Activated B cell treated with CpG ODN at 0.5 μM for 24 hours (primary cell): ENCODE measurements at regions of chr3 and their contacts with region 1.

Region 1: GRCh38 chr3:9119331-9119730 is 130.1 kb downstream of the SRGAP3 start:
- DNase-seq: no peak
- ATAC-seq: no peak
- H3K4me3 Mint-ChIP-seq: no peak overlapping the region
- H3K27ac Mint-ChIP-seq: no peak overlapping the region
- H3K4me1 Mint-ChIP-seq: no peaks in the 10 kb centered on the region
- H3K27me3 Mint-ChIP-seq: peaks cover 3% of the 10 kb centered on the region
- CTCF ChIP-seq: no peak

Region 2: DNA sequence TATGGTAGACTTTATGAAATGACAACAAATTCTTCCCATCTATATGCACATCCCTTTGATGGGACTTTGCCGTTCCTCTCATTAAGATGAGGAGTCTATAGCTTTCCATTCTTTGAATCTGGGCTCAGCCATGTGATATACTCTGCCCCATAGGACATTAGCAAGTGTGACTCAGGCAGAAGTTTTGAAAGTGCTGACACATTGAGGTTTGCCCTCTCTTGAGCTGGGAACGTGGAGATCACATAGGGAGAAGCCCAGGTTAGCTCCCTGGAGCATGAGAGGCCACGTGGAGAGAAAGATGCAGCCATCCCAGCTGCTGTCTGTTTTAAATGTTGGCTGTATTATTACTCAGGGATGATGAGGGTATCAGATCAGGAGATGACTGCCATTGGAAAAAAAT is 282.2 kb before region 1 on chr3:
- CTCF ChIA-PET with region 1: no interaction called
- POLR2A ChIA-PET with region 1: no interaction called
- intact Hi-C with region 1: no loop called
- DNase-seq: no peak
- ATAC-seq: no peak
- H3K4me3 Mint-ChIP-seq: no peak overlapping the region
- H3K27ac Mint-ChIP-seq: no peak overlapping the region
- H3K4me1 Mint-ChIP-seq: no peaks in the 10 kb centered on the region
- H3K27me3 Mint-ChIP-seq: no peaks in the 10 kb centered on the region
- CTCF ChIP-seq: no peak

Region 3: DNA sequence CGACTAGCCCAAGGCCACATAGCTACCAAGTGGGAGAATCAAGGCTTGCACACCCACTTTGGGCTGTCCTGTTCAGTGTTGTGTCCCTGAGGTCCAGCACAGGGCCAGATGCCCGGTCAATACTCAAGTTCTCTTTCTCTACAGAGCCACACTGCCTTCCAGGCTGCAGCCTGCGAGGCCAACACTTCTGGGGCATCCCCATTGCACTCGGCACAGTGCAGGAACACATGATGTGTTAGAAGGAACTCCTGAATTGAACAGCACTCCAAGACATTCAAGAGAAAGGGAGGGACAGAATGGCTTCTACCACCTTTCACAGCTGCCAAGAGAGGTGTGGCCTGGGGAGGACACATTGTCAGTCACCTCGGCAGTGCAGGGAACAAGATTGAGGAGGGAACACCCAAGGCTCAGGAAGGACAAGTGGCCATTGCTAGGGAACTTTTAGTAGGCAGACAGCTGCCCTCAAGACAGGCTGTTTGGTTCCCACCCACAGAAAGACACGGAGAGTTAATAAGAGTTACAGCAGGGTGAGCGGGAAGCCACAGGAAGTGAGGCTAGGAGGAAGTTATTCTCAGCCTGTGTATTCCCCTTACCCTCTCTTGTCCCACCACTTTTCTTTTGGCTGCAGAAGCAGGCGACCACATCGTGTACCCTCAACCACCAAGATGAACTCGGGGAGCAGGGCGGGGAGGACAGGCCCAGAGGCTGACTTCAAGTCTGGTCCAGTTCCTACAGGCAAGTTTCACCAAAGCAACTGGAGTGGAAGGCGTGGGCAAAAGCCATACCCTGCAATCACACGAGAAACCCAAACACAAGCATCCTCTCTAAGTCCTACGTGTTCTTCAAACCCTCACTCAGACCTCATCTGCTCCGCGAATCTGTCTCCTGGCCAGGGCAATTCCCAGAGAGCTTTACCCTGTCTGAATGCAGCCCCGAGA is 60.8 kb after region 1 on chr3:
- CTCF ChIA-PET with region 1: no interaction called
- POLR2A ChIA-PET with region 1: no interaction called
- intact Hi-C with region 1: loop called (anchors 5 kb)
- DNase-seq: no peak
- ATAC-seq: peak; percentile 37
- H3K4me3 Mint-ChIP-seq: peak overlapping the region; percentile 53
- H3K27ac Mint-ChIP-seq: no peak overlapping the region
- H3K4me1 Mint-ChIP-seq: peaks cover 22% of the 10 kb centered on the region
- H3K27me3 Mint-ChIP-seq: no peaks in the 10 kb centered on the region
- CTCF ChIP-seq: no peak

Region 4: DNA sequence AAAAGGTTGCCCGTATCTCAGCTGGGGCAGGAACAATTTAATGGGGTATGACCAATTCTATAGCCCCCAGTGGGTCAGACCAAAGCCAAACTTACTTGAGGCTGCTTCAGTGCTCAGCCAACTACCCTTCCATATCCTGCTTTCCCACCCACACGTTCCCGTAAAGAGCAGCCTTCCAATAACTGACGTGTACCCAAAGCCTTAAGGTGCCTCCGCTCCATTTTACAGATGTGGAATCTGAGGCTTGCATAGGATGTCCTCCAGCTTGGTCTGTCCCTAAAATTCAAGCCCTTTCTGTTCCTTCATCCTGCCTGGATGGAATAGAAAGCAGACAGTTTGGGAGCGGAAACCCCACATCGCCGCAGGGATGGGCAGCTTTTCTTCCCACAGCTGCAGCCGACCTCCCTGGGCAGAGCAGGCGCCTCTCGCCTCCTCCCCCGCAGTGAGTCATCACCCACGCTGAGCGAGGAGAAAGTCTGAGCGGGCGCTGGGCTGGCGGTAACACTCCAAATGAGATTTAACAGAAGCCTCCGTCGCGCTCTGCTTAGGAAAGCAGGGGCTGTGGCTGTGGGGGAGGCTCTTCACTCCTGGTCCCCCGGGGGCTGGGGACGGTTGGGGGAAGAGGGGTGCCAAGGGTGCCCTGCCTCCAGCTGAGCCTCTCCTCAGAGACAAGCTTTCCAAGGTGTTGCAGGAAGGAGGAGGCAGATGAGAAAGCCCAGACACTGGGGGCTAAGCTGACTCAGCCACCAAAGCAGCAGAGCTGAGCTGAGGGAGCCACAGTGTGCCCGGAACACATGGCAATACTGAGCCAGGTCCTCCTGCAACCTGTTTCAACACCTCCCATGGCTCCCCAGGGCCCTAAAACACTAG is 1977.2 kb after region 1 on chr3:
- CTCF ChIA-PET with region 1: no interaction called
- POLR2A ChIA-PET with region 1: no interaction called
- intact Hi-C with region 1: no loop called
- DNase-seq: no peak
- ATAC-seq: peak; percentile 66
- H3K4me3 Mint-ChIP-seq: no peak overlapping the region
- H3K27ac Mint-ChIP-seq: no peak overlapping the region
- H3K4me1 Mint-ChIP-seq: peaks cover 5% of the 10 kb centered on the region
- H3K27me3 Mint-ChIP-seq: no peaks in the 10 kb centered on the region
- CTCF ChIP-seq: no peak